Breast epithelium (tissue), 4 donors: ENCODE measurements at regions of chr4 and their contacts with region 1.

Region 1: DNA sequence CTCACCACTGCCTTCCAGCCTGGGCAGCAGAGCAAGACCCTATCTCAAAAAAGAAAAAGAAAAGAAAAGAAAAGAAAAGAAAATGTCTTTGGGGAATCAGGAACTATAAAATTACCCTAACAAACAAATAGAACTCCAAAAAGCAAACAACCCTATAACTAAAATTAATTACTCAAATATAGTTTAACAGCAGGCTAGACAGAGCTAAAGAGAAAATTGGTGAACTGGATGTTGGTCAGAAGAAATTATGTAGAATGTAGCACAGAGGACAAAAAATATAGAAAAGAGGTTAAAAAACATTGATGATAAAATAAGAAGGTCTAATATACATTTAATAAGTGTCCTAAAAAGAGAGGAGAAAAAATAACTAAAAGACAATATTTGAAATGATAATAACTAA is 27.8 kb upstream of the WWC2 start:
- DNase-seq: no peak
- H3K4me3 ChIP-seq: no peak overlapping the region
- H3K27ac ChIP-seq: no peak overlapping the region
- H3K4me1 ChIP-seq: no peaks in the 10 kb centered on the region
- H3K27me3 ChIP-seq: no peaks in the 10 kb centered on the region
- CTCF ChIP-seq: no peak
- POLR2A ChIP-seq: no peak

Region 2: GRCh38 chr4:181289198-181289597 is 1782.0 kb before region 1 on chr4:
- intact Hi-C with region 1: no loop called
- DNase-seq: no peak
- H3K4me3 ChIP-seq: no peak overlapping the region
- H3K27ac ChIP-seq: no peak overlapping the region
- H3K4me1 ChIP-seq: no peaks in the 10 kb centered on the region
- H3K27me3 ChIP-seq: no peaks in the 10 kb centered on the region
- CTCF ChIP-seq: no peak
- POLR2A ChIP-seq: no peak

Region 3: DNA sequence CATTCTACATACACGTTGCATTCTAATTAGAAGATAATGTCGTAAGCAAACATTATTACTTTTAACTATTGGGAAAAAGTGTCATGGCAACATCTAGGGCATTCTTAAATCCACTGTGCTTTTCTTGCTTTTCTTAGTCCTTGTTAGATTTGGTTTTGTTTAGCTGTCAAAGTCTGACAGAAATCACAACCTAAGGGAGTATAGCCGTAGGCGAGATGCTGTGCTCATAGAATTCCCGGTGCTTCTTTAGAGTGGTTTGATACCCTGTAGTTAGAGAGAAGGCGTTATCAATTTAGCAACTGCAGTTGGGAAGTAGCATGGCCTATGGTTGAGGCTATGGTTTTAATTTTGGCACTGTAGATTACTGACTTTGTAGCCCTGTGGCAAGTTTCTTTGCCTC is 73.6 kb after region 1 on chr4:
- intact Hi-C with region 1: loop called (anchors 2 kb)
- DNase-seq: no peak
- H3K4me3 ChIP-seq: no peak overlapping the region
- H3K27ac ChIP-seq: no peak overlapping the region
- H3K4me1 ChIP-seq: peaks cover 0 to 5% of the 10 kb centered on the region in 2 donors
- H3K27me3 ChIP-seq: no peaks in the 10 kb centered on the region
- CTCF ChIP-seq: no peak
- POLR2A ChIP-seq: no peak